Left cardiac atrium (tissue), 4 donors: ENCODE measurements at regions of chr12 and their contacts with region 1.

Region 1: DNA sequence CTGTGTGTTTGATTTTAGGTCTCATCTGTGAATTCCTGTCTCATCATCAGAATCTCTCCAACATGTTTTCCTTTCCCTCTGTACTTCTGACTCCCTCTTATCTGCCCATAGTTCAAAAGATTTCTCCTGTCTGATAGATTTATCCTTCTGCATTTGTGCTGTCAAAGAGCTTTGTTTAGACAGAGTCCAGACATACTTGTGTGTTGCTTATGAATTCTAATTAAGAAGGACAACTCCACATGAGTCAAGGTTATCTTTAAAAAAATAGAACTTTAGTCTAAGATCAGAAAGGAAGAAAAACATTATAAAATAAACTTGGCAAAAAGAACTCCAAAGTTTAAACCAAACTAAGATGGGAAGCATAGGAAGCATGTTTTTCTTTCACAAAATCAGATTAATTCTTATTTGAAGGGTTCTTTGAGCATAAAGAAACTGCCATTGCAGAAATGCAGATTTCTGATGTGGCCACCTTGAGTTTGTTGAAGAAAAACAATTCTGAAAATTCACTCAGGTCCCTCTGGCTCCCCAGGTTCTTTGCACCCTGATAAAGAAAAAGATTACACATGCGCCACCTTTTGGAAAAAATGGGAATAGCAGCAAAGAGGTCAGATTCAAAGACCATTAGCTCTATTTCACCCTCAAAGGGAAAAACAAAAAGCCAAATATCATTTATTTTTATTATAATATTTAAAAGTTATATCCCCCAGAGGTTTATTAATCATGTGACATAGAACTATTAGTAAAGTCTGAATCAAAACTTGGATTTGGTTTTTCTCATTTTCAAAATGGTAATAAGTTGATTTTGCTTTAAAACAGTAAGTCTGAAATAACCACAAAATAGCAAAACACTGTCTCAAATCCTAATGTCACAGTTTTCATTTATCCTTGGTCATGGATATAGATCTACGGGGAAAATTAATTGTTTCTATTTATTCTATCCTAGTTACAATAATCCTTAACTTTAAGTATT is 143.7 kb upstream of the DCN start:
- DNase-seq: peak; percentile 24
- ATAC-seq: peak in 1 of 2 donors; percentile 54

Region 2: DNA sequence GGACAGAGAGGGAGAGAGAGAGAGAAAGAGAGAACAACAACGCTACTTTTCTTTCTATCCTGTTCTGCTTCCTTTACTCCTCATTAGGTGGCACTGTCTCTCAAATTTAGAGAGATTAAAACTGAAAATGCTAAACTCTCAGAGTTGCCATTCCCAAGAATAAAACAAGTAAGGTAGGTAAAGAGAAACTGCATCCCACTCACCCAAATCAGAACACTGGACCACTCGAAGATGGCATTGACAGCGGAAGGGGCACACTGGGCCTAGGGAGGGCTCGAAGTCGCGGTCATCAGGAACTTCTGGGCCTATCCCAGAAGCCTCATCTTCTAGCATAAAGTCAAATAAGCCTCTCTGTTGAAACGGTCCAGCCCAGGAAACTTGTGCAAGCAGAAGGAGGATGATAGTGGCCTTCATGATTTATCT is 148.2 kb before region 1 on chr12:
- intact Hi-C with region 1: loop called in 1 of 2 experiments (anchors 10 kb)
- DNase-seq: no peak
- ATAC-seq: peak; percentile 62 to 70